ENCODE measurements at regions of chr6 and their contacts with region 1.

Region 1: GRCh38 chr6:15079288-15079817 is 166.5 kb upstream of the JARID2 start:
- DNase-seq: no peak
- ATAC-seq: no peak
- H3K4me3 Mint-ChIP-seq: no peak overlapping the region
- H3K27ac Mint-ChIP-seq: no peak overlapping the region
- H3K4me1 Mint-ChIP-seq: peaks cover 6% of the 10 kb centered on the region
- H3K27me3 Mint-ChIP-seq: no peaks in the 10 kb centered on the region

Region 2: DNA sequence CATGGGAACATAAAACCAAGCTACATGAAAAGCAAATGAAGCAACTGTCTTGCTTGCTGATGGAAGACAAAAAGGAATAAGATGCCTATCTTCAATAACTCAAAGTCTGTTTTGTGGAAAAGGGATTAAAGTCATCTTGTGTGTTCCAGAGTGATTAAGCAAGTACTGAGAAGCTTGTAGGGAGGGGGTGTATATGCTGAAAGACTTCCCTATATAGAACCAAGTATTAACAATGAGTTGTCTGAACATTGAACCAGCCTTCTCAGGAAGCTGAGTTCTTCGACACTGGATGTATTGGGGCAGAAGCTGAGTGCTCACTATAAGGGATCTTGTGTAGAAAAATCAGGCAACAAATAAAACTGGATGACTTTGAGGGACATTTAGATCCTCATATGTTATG is 510.0 kb before region 1 on chr6:
- CTCF ChIA-PET with region 1: no interaction called
- POLR2A ChIA-PET with region 1: no interaction called
- intact Hi-C with region 1: no loop called
- DNase-seq: no peak
- ATAC-seq: no peak
- H3K4me3 Mint-ChIP-seq: no peak overlapping the region
- H3K27ac Mint-ChIP-seq: no peak overlapping the region
- H3K4me1 Mint-ChIP-seq: peaks cover 5% of the 10 kb centered on the region
- H3K27me3 Mint-ChIP-seq: no peaks in the 10 kb centered on the region

Region 3: DNA sequence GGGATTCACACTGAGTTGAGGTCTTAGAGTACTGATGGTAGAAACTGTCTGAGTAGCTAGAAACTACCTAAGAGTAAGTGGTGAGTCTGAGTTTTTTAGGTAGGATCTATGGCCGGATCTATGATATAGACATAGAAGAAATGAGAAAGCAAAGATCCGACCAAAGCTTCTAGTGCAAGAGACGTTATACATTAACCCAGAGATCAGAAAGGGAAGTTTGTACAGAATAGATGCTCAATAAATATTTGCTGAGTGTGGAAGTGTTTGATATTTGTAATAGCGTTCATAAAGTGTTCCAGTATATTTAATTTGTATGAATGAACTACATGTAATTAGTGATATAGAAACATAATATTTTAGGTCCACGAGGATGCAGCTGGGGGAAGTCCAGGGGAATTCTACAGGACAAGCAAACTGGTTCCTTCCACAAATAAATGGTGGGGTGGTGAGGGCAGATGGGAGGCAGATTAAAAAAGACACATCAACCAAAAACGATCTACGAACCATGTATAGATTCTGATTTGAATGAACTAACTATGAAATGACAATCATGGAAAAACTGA is 134.6 kb after region 1 on chr6:
- CTCF ChIA-PET with region 1: no interaction called
- POLR2A ChIA-PET with region 1: no interaction called
- intact Hi-C with region 1: loop called in 1 of 2 experiments (anchors 1 kb)
- DNase-seq: no peak
- ATAC-seq: no peak
- H3K4me3 Mint-ChIP-seq: no peak overlapping the region
- H3K27ac Mint-ChIP-seq: no peak overlapping the region
- H3K4me1 Mint-ChIP-seq: peaks cover 6% of the 10 kb centered on the region
- H3K27me3 Mint-ChIP-seq: no peaks in the 10 kb centered on the region

Measured in activated CD4-positive, alpha-beta T cell treated with anti-CD3 and anti-CD28 coated beads for 36 hours (primary cell).